Activated CD4-positive, alpha-beta T cell treated with anti-CD3 and anti-CD28 coated beads for 36 hours (primary cell): ENCODE measurements at regions of chr13 and their contacts with region 1.

Region 1: GRCh38 chr13:75294110-75294509 is 187.9 kb downstream of the TBC1D4 start:
- DNase-seq: no peak
- ATAC-seq: no peak
- H3K4me3 Mint-ChIP-seq: no peak overlapping the region
- H3K27ac Mint-ChIP-seq: no peak overlapping the region
- H3K4me1 Mint-ChIP-seq: peaks cover 38% of the 10 kb centered on the region
- H3K27me3 Mint-ChIP-seq: no peaks in the 10 kb centered on the region

Region 2: DNA sequence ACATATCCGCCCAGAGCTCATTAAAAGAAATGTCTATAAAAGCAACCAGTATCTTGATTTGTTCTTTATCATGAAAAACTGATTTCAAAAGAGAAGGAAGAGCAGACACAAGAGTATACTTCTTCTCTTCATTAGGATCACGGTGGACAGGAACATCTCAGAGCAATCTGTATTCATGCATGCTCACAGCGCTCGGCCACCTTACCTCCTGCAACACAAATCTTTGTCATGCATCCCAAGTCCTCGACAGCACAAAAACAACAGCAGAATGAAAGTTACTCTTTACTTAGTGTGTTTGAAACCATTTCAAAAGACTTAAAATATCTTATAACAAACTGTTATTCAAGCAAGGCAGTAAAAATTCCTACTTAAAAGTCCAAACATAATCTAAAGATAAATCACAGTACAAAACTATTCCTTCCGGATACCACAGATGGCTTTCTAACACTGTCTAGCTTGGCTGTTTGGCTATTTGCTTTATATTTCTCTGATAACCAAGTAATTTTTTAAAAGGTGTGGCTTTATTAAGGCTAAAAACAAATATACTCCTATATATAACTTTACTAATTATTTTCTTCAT is 13.3 kb after region 1 on chr13:
- CTCF ChIA-PET with region 1: interaction called, 3 read pairs
- POLR2A ChIA-PET with region 1: no interaction called
- intact Hi-C with region 1: loop called in 1 of 2 experiments (anchors 2 kb)
- DNase-seq: no peak
- ATAC-seq: no peak
- H3K4me3 Mint-ChIP-seq: no peak overlapping the region
- H3K27ac Mint-ChIP-seq: peak overlapping the region; percentile 60
- H3K4me1 Mint-ChIP-seq: peaks cover 56% of the 10 kb centered on the region
- H3K27me3 Mint-ChIP-seq: no peaks in the 10 kb centered on the region